Right cardiac atrium (tissue), 5 donors: ENCODE measurements at regions of chr14 and their contacts with region 1.

Region 1: GRCh38 chr14:88168498-88169165 is 154.4 kb downstream of the KCNK10 start:
- DNase-seq: no peak
- ATAC-seq: peak; percentile 64 to 75
- H3K4me3 ChIP-seq: no peak overlapping the region
- H3K27ac ChIP-seq: no peak overlapping the region
- H3K4me1 ChIP-seq: no peaks in the 10 kb centered on the region
- H3K27me3 ChIP-seq: no peaks in the 10 kb centered on the region

Region 2: GRCh38 chr14:87944987-87945604 is 223.5 kb before region 1 on chr14:
- intact Hi-C with region 1: loop called in 3 of 4 experiments (anchors 10 kb)
- DNase-seq: no peak
- ATAC-seq: no peak
- H3K4me3 ChIP-seq: no peak overlapping the region
- H3K27ac ChIP-seq: no peak overlapping the region
- H3K4me1 ChIP-seq: no peaks in the 10 kb centered on the region
- H3K27me3 ChIP-seq: no peaks in the 10 kb centered on the region